ENCODE measurements at regions of chr7 and their contacts with region 1.

Region 1: DNA sequence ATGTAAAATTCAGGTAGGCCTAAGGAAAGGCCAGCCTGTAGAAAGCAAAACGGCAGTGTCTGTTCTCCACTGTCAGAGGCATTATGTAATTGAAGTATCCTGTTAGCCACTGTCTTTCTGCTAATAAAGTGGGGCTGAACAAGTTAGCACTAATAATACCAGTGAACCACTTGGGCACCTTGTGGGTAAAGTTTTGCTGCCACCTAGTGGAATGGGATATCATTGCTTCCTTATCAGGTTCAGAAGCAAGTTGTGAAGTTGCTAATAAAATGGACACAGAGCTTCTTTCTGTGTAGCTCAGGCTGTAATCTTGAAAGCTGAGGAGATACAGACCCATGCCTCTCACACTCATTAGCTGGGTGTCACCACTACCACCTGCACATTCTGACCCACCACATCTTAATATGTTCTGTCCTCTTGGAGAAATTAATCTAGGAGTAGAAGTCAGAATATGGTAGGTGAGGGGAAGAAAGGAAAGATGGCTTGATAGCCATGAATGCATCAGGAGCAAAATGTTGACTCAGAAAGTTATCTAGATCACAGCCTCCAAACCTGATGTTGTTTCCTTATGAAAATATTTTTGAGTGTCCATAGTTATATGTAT is 175.1 kb downstream of the SEPTIN7 start:
- DNase-seq: no peak

Region 2: GRCh38 chr7:35508623-35509400 is 467.1 kb before region 1 on chr7:
- intact Hi-C with region 1: no loop called
- DNase-seq: no peak

Region 3: DNA sequence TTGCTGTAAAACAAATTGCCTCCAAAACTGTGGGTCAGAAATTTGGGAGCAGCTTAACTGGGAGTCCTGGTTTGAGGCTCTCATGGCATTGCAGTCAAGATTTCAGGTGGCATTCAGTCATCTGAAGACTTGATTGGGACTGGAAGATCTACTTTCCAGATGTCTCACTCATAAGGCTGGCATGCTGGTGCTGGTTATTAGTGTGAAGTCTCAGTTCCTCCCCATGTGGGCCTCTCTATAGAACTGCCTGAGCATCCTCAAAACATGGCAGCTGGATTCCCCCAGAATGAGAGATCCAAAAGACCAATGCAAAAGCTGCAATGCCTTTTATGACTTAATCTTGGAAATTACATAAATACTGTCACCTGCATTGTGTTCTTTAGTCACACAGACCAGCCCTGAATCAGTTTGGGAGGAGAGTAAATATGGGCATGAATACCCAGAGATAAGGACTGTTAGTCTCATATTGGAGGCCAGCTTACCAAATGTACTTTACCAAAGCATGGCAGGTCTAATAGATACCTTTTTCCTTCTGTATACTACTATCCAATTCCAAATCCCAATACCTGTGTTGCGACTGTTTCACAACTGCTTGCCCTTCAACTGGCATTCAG is 274.6 kb before region 1 on chr7:
- intact Hi-C with region 1: loop called (anchors 10 kb)
- DNase-seq: no peak